Activated CD4-positive, alpha-beta memory T cell treated with anti-CD3 and anti-CD28 coated beads for 36 hours (primary cell): ENCODE measurements at regions of chr17 and their contacts with region 1.

Region 1: GRCh38 chr17:43170766-43171585 is at the start of gene NBR1:
- DNase-seq: peak; percentile 99
- H3K4me3 Mint-ChIP-seq: no peak within 1 kb of the TSS
- H3K27ac Mint-ChIP-seq: no peak within 1 kb of the TSS
- H3K4me1 Mint-ChIP-seq: peaks cover 25% of the 10 kb centered on the region
- H3K27me3 Mint-ChIP-seq: no peaks in the 10 kb centered on the region
- total RNA-seq, gene NBR1: 62.0 to 65.9 TPM

Region 2: GRCh38 chr17:42337442-42337841 is 833.5 kb before region 1 on chr17:
- CTCF ChIA-PET with region 1: no interaction called
- POLR2A ChIA-PET with region 1: no interaction called
- intact Hi-C with region 1: loop called (anchors 5 kb)
- DNase-seq: peak; percentile 91
- H3K4me3 Mint-ChIP-seq: peak overlapping the region; percentile 60
- H3K27ac Mint-ChIP-seq: peak overlapping the region; percentile 91
- H3K4me1 Mint-ChIP-seq: peaks cover 78% of the 10 kb centered on the region
- H3K27me3 Mint-ChIP-seq: no peaks in the 10 kb centered on the region

Region 3: DNA sequence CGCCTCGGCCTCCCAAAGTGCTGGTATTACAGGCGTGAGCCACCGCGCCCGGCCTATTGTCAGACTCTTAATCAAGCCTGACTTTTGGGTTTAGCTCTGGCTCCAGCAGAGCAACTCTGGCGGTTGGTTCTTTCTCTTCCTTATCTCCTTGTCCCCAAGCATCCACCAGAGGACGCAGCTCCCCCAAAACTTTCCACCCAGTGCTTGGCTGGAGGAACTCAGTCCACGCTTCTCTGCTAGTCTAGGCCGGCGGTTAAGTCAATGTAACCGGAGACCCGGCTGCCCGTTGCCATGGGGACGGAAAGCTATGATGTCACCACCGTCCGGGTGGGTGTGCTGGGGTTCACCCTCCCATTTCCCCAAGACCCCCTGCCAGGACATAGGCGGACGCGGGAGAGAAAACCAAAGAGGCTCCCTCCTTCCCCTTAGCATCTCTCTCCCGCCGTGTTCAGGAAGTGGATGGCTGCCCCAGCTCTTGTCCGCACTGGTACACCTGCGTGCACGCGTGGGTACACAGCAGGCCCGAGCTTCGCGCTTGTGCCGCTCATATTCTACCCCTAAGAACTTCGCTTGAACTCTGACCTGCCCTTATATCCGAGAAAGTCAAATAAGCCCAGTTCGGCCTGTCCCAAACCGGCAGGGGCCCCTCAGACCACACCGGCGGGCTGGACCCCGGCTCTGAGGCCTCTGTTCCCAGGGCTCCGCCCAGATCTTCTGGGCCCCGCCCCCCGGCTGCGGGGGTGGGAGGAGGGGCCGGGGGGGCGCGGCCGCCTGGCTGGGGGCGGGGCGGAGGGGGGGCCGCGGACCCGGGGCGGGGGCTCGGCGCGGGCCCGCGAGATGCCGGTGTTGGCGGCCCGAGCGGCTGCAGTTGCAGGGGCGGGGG is 146.3 kb before region 1 on chr17 and contains the start of gene RND2:
- CTCF ChIA-PET with region 1: interaction called, 3 read pairs
- POLR2A ChIA-PET with region 1: interaction called, 3 read pairs
- intact Hi-C with region 1: loop called (anchors 2 kb)
- DNase-seq: peak; percentile 88
- H3K4me3 Mint-ChIP-seq: peak within 1 kb of the TSS; percentile 74
- H3K27ac Mint-ChIP-seq: peak within 1 kb of the TSS; percentile 21
- H3K4me1 Mint-ChIP-seq: peaks cover 21% of the 10 kb centered on the region
- H3K27me3 Mint-ChIP-seq: no peaks in the 10 kb centered on the region
- total RNA-seq, gene RND2: 0.07 TPM in 1 of 2 experiments, not detected in the other

Region 4: DNA sequence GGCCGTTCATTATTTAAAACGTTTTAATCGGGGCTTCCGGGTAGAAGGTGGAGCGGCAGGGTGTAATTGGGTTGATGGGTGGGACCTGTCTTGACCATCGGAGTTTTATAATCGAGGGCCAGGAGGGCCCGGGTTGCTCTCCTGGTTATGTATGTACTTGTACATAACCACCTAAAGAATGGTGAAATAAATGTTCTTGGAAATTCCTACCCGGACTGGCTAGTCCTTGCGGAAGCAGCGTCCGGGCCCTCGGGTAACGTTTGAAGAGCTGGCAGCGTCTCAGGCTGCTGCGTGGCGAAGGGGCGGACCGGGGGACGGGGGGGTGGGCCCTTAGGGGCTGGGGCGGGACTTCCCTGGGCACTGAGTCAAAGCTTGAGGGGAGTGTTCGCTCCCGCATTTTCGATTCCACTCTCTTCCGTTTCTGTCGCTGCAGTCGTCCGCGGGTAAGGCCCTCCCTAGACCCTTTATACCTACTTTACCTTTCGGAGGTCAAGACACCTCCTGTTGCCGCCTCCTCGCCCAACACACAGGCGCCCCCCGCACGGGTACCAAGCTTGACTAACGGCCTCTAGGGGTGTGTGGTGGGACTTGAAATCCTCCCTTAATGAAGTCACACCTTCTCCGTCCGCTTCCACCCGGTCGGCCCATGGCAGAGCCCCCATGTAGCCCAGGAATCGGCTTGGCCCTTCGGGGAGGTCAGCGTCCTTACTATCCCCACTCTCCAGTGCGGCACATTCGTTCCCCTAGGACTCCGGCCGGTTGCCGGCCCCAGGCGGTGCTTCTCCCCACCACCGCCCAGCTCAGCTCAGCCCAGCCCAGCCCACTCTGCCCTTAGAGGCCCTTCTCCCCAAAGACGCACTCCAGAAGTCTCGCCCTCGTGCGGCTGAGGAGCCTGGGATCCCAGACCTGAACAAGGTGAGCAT is 40.8 kb after region 1 on chr17 and contains the start of gene TMEM106A:
- CTCF ChIA-PET with region 1: interaction called, 4 read pairs
- POLR2A ChIA-PET with region 1: interaction called, 9 read pairs
- intact Hi-C with region 1: loop called (anchors 1 kb)
- DNase-seq: peak; percentile 85
- H3K4me3 Mint-ChIP-seq: peak within 1 kb of the TSS; percentile 88
- H3K27ac Mint-ChIP-seq: peak within 1 kb of the TSS; percentile 82
- H3K4me1 Mint-ChIP-seq: peaks cover 27% of the 10 kb centered on the region
- H3K27me3 Mint-ChIP-seq: no peaks in the 10 kb centered on the region
- total RNA-seq, gene TMEM106A: 10.1 to 10.4 TPM

Region 5: GRCh38 chr17:43388359-43389045 is 217.5 kb after region 1 on chr17:
- CTCF ChIA-PET with region 1: no interaction called
- POLR2A ChIA-PET with region 1: no interaction called
- intact Hi-C with region 1: loop called (anchors 1 kb)
- DNase-seq: peak; percentile 94
- H3K4me3 Mint-ChIP-seq: peak overlapping the region; percentile 87
- H3K27ac Mint-ChIP-seq: peak overlapping the region; percentile 97
- H3K4me1 Mint-ChIP-seq: peaks cover 18% of the 10 kb centered on the region
- H3K27me3 Mint-ChIP-seq: no peaks in the 10 kb centered on the region

Region 6: DNA sequence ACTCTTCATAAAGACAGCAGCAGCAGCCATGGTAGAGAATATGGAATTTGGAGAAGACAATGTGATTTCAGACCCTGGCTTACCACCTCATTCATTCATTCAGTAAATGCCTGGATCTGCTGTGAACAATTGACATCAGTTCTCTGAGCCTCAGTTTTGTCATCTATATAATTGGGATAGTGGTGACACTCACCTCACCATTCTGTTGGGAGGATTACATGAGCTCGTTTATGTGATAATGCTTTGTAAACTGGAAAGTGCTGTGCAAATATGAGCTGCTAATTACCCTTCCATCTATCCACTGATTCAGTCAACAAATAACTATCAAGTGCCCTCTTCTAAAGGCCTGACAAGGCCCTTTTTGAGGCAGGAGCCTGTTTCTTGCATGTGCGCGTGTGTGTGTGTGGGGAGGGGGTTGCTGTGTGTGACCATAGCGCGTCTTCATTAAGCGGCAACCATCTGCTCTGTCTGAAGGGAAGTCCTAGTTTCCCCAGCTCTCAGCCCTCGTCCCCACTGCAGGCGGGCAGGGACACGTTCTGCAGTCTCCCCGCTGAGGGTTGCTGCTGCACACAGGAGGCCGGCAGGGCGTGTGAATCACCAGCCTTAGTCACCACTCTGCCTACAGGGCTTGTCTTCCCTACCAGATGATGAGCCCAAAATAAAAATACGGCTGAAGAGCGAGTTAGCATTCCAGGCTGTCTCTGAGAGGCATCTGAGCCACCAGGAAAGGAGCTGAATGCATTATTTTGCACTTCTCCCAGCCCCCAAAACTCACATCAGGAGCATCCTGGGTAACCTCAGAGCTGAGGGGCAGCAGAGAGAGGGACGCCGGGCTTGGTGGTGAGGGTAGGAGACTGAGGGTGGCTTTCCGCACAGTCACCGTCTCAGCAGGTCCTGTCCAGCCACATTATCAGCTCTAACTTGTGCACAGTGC is 247.7 kb after region 1 on chr17:
- CTCF ChIA-PET with region 1: no interaction called
- POLR2A ChIA-PET with region 1: no interaction called
- intact Hi-C with region 1: no loop called
- DNase-seq: peak; percentile 18
- H3K4me3 Mint-ChIP-seq: no peak overlapping the region
- H3K27ac Mint-ChIP-seq: no peak overlapping the region
- H3K4me1 Mint-ChIP-seq: no peaks in the 10 kb centered on the region
- H3K27me3 Mint-ChIP-seq: peaks cover 6% of the 10 kb centered on the region